WTC11 (cell line): ENCODE measurements at regions of chr1 and their contacts with region 1.

Region 1: GRCh38 chr1:30911046-30911954 is 2.7 kb upstream of the SDC3 start:
- DNase-seq: peak; percentile 87
- ATAC-seq: peak; percentile 71
- H3K4me3 Mint-ChIP-seq: no peak overlapping the region
- H3K27ac Mint-ChIP-seq: no peak overlapping the region
- H3K4me1 Mint-ChIP-seq: peaks cover 33% of the 10 kb centered on the region
- H3K27me3 Mint-ChIP-seq: peaks cover 17% of the 10 kb centered on the region
- CTCF ChIP-seq: peak; percentile 59; the same call in 1 of the 2 replicates

Region 2: DNA sequence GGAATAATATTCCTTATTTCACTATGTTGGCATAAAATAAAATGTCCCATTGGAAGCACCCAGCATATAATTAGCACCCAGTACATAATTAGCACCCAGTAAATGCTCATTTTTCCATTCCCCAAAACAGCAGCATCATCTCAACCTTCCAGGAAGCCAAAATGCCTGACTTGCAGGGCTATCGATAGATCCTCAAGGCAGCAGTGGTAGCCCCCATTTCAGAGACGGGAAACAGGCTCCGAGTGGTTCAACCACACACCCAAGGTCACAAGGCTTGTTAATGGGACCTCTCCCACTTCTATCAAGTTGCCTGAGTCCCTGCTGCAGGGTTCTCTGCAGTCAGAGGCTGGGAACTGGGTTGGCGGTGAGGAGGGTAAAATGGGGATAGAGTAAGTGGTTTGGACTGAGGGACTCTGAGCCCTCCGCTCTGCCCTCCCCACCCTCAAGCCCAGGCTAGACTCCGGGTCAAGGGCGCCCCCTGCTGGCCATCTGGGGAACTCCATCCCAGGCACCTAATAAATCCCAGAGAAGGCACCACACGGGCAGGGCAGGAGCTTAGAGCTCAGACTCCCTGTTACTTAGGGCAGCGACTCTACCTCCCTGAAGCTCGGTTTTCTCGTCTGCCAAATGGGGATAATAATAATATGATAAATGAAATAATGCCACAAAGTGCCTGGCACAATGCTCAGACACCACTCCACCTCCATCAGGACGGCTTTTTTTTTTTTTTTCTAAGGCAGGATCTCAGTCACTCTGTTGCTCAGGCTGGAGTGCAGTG is 131.8 kb before region 1 on chr1:
- CTCF ChIA-PET with region 1: interaction called, 134 read pairs
- POLR2A ChIA-PET with region 1: no interaction called
- DNase-seq: peak; percentile 97
- ATAC-seq: peak; percentile 82
- H3K4me3 Mint-ChIP-seq: no peak overlapping the region
- H3K27ac Mint-ChIP-seq: no peak overlapping the region
- H3K4me1 Mint-ChIP-seq: peaks cover 10% of the 10 kb centered on the region
- H3K27me3 Mint-ChIP-seq: peaks cover 7% of the 10 kb centered on the region; the same call in 1 of the 2 replicates
- CTCF ChIP-seq: peak; percentile 100

Region 3: DNA sequence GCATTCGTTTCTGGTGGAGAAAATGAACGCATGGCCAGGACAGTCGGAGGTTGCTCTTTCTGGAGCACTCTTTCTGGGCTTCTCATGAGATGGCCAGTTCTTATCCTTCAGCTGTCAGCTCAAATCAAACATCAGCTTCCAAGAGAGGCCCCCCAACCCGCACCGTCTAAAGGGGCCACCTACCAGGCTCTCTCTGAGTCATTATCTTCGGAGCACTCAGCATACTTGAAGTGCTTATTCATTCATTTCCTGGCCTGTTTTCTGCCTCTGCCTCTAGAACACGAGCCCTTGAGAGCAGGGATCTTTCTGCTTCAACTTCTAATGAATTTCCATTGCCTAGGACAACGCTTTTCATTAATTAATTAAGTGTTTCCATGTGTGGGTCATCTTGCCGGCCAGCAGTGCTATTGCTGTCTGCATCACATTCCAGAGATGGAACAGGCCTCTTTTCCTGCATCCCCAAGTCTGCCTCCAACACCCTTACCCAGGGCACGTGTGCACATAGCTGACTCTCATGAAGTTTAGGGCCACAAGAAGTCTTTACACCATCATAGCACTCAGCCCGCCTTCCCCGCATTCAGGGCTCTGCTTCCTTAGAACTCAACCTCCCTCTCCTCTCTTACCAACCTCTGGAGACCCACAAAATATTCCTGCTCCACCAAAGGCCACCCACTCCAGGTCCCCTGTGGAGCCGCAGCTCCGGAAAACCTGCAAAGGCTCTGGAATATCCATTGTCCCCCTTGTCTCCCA is 101.6 kb before region 1 on chr1:
- CTCF ChIA-PET with region 1: interaction called, 606 read pairs
- POLR2A ChIA-PET with region 1: no interaction called
- DNase-seq: no peak
- ATAC-seq: peak; percentile 49
- H3K4me3 Mint-ChIP-seq: no peak overlapping the region
- H3K27ac Mint-ChIP-seq: 0 out of 2 replicates have a peak overlapping the region, but pooled peaks have one; percentile 35
- H3K4me1 Mint-ChIP-seq: peaks cover 48% of the 10 kb centered on the region
- H3K27me3 Mint-ChIP-seq: no peaks in the 10 kb centered on the region
- CTCF ChIP-seq: no peak

Region 4: DNA sequence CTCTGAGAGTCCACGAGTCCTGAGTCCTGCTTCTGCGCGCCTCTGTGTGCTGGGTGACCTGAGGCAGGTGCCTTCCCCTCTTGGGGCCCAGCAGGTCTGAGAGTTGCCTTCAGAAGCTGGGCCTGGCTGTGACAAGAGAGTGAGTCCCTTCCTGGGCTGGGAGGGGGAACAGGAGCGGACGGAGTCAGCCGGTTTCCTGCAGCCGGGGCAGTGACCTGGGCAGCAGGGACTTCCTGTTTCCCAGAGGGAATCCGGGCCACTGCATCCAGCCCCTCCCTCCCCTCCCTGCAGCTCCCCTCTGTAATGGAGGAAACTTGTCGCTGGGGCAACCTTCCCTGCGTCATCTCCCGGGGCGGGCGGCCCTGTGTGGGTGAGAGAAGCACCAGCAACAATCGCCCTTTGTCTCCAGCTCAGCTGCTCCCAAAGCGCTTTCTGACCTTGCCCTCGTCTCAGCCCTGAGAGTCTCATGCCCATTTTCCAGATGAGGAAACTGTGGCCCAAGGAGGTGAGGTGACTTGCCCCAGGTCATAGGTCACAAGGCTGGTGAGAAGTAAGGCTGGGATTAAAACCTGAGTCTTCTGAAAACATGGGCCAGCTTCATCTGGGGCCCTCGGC is 63.8 kb before region 1 on chr1:
- CTCF ChIA-PET with region 1: interaction called, 28 read pairs
- POLR2A ChIA-PET with region 1: no interaction called
- DNase-seq: peak; percentile 67
- ATAC-seq: peak; percentile 77
- H3K4me3 Mint-ChIP-seq: no peak overlapping the region
- H3K27ac Mint-ChIP-seq: 0 out of 2 replicates have a peak overlapping the region, but pooled peaks have one; percentile 35
- H3K4me1 Mint-ChIP-seq: peaks cover 43% of the 10 kb centered on the region
- H3K27me3 Mint-ChIP-seq: no peaks in the 10 kb centered on the region
- CTCF ChIP-seq: no peak

Region 5: DNA sequence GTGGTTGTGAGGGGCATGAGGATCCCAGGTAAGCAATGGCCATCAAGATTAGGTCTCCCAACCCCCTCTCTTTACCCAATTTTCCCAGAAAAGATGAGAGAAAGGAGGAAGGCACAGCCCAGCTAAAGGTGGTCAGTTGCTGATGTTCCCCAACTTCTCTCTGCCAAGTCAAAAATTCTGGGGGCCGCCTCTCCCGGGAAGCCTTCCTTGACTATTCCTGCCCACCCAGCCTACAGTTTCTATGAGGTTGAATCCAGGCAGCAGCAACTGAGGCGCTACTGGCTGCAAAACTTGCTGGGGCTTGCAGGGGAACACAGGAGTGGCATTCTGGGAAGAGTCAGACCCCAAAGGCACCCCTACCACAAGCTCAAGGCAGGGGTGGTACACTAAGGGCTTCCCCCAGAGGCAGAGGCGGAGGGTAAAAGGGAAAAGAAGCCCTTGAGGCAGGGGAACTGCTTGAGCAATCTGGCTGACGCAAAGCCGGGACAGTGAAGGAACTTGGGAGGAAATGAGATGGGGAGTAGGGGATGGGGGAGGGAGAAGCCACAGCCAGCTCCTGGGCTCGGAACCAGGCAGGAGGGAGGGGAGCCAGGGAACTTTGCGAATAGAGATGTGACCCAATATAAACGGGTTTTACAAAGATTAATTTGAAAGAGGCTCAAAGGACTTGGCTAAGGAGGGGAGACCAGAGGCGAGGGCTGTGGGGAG is 33.9 kb before region 1 on chr1:
- CTCF ChIA-PET with region 1: interaction called, 14 read pairs
- POLR2A ChIA-PET with region 1: no interaction called
- DNase-seq: no peak
- ATAC-seq: peak; percentile 43
- H3K4me3 Mint-ChIP-seq: no peak overlapping the region
- H3K27ac Mint-ChIP-seq: peak overlapping the region; percentile 79; the same call in 1 of the 2 replicates
- H3K4me1 Mint-ChIP-seq: peaks cover 34% of the 10 kb centered on the region
- H3K27me3 Mint-ChIP-seq: no peaks in the 10 kb centered on the region
- CTCF ChIP-seq: no peak

Region 6: GRCh38 chr1:30929135-30929889 is 18.0 kb after region 1 on chr1:
- CTCF ChIA-PET with region 1: interaction called, 13 read pairs
- POLR2A ChIA-PET with region 1: interaction called, 3 read pairs
- DNase-seq: peak; percentile 65
- ATAC-seq: peak; percentile 71
- H3K4me3 Mint-ChIP-seq: no peak overlapping the region
- H3K27ac Mint-ChIP-seq: 0 out of 2 replicates have a peak overlapping the region, but pooled peaks have one; percentile 58
- H3K4me1 Mint-ChIP-seq: peaks cover 5% of the 10 kb centered on the region
- H3K27me3 Mint-ChIP-seq: no peaks in the 10 kb centered on the region
- CTCF ChIP-seq: peak; percentile 87; the same call in 1 of the 2 replicates